ENCODE measurements at regions of chr12 and their contacts with region 1.

Region 1: GRCh38 chr12:6851921-6852650 is at the start of gene USP5:
- DNase-seq: peak; percentile 99
- ATAC-seq: peak; percentile 79
- H3K4me3 Mint-ChIP-seq: peak within 1 kb of the TSS; percentile 95
- H3K27ac Mint-ChIP-seq: peak within 1 kb of the TSS; percentile 100
- H3K4me1 Mint-ChIP-seq: peaks cover 19% of the 10 kb centered on the region
- H3K27me3 Mint-ChIP-seq: no peaks in the 10 kb centered on the region
- CTCF ChIP-seq: no peak
- total RNA-seq, gene USP5: 141 to 158 TPM (median 149 TPM) in 3 replicates

Region 2: DNA sequence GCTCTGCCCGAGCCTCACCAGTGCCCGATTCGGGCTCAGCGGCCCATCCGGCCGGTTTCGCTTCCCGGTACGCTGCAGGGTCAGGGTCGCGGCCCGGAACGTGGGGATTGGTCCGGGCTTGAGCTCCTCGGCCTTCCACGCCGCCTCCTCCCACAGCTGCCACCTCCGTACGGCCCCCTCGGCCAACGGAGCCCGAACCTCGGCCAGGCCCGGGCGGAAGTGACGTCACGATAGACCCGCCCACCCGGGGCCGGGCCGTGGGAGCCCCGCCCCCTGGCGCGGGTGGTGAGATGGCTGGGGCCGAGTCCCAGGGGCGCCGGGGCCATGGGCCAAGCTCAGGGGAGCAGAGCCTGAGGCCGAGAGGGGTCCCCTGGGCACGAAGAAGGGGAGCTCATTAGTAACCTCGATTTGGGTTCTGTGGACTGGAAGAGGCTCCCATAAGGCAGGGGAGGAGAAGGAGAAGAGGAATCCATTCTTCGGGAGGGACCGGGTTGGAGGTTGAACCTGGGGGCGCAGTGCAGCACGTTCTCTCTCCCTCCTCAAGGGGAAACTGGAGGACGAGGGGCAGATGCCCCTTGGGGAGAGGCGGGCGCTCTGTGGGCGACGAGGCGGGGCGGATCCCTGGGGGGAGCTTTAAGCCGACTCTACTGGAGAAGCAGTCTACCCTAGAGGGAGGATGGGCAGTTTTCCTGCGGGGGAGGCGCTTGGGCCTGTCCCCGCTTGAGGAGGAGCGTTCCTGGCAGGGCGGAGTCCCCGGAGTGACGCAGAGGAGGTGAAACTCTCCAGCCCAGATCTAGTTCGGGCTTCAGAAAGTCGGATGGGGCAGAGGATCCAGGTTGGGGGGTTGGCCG is 98.9 kb before region 1 on chr12 and contains the start of gene MLF2:
- CTCF ChIA-PET with region 1: interaction called, 34 read pairs
- POLR2A ChIA-PET with region 1: interaction called, 15 read pairs
- DNase-seq: peak; percentile 99
- ATAC-seq: peak; percentile 95
- H3K4me3 Mint-ChIP-seq: peak within 1 kb of the TSS; percentile 92
- H3K27ac Mint-ChIP-seq: peak within 1 kb of the TSS; percentile 99
- H3K4me1 Mint-ChIP-seq: peaks cover 25% of the 10 kb centered on the region
- H3K27me3 Mint-ChIP-seq: no peaks in the 10 kb centered on the region
- CTCF ChIP-seq: peak; percentile 89; the same call in 1 of the 2 replicates
- total RNA-seq, gene MLF2: 226 to 236 TPM (median 229 TPM) in 3 replicates

Region 3: GRCh38 chr12:6825398-6826124 is 26.5 kb before region 1 on chr12:
- CTCF ChIA-PET with region 1: interaction called, 10 read pairs
- POLR2A ChIA-PET with region 1: interaction called, 3 read pairs
- DNase-seq: peak; percentile 95
- ATAC-seq: peak; percentile 35
- H3K4me3 Mint-ChIP-seq: peak overlapping the region; percentile 78
- H3K27ac Mint-ChIP-seq: no peak overlapping the region
- H3K4me1 Mint-ChIP-seq: peaks cover 60% of the 10 kb centered on the region
- H3K27me3 Mint-ChIP-seq: peaks cover 45% of the 10 kb centered on the region
- CTCF ChIP-seq: peak; percentile 90

Region 4: GRCh38 chr12:6839482-6840201 is 12.4 kb before region 1 on chr12:
- CTCF ChIA-PET with region 1: interaction called, 54 read pairs
- POLR2A ChIA-PET with region 1: interaction called, 9 read pairs
- DNase-seq: peak; percentile 73
- ATAC-seq: peak; percentile 73
- H3K4me3 Mint-ChIP-seq: no peak overlapping the region
- H3K27ac Mint-ChIP-seq: no peak overlapping the region; the same call in 1 of the 2 replicates
- H3K4me1 Mint-ChIP-seq: peaks cover 18% of the 10 kb centered on the region
- H3K27me3 Mint-ChIP-seq: no peaks in the 10 kb centered on the region
- CTCF ChIP-seq: no peak

Region 5: GRCh38 chr12:6890789-6891645 is 38.9 kb after region 1 on chr12:
- CTCF ChIA-PET with region 1: interaction called, 23 read pairs
- POLR2A ChIA-PET with region 1: interaction called, 14 read pairs
- DNase-seq: peak; percentile 99
- ATAC-seq: peak; percentile 92
- H3K4me3 Mint-ChIP-seq: peak overlapping the region; percentile 71
- H3K27ac Mint-ChIP-seq: peak overlapping the region; percentile 99
- H3K4me1 Mint-ChIP-seq: peaks cover 33% of the 10 kb centered on the region
- H3K27me3 Mint-ChIP-seq: peaks cover 4% of the 10 kb centered on the region; the same call in 1 of the 2 replicates
- CTCF ChIP-seq: peak; percentile 35

Region 6: DNA sequence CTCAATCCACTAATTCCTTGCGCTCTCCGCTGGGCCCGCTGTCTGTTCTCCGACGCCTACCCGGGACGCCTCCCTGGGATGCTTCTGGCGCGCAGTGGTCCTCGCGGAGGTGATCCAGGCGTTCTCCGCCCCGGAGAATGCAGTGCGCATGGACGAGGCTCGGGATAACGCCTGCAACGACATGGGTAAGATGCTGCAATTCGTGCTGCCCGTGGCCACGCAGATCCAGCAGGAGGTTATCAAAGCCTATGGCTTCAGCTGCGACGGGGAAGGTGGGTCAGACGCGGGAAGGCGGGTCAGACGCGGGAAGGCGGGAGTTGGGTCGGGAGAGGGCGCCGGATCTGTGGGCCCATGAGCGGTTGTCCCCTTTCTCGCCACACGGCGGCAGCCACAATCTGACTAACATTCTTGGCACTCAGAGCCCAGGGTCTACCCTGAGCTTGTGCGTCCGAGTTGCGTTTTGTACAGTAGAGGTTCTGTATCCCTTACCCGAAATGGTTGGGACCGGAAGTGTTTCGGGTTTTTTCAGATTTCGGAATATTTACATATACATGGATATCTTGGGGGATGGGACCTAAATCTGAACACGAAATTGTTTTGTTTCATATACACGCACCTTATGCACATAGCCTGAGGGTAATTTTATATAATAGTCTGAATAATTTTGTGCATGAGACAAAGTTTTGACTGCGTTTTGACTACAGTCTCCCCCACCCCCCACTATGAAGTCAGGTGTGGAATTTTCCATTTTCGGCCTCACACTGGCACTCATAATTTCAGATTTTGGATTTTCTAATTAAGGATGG is 92.5 kb after region 1 on chr12:
- CTCF ChIA-PET with region 1: interaction called, 21 read pairs
- POLR2A ChIA-PET with region 1: interaction called, 14 read pairs
- DNase-seq: peak; percentile 92
- ATAC-seq: peak; percentile 25
- H3K4me3 Mint-ChIP-seq: peak overlapping the region; percentile 98
- H3K27ac Mint-ChIP-seq: peak overlapping the region; percentile 99
- H3K4me1 Mint-ChIP-seq: peaks cover 34% of the 10 kb centered on the region
- H3K27me3 Mint-ChIP-seq: no peaks in the 10 kb centered on the region
- CTCF ChIP-seq: no peak

Region 7: DNA sequence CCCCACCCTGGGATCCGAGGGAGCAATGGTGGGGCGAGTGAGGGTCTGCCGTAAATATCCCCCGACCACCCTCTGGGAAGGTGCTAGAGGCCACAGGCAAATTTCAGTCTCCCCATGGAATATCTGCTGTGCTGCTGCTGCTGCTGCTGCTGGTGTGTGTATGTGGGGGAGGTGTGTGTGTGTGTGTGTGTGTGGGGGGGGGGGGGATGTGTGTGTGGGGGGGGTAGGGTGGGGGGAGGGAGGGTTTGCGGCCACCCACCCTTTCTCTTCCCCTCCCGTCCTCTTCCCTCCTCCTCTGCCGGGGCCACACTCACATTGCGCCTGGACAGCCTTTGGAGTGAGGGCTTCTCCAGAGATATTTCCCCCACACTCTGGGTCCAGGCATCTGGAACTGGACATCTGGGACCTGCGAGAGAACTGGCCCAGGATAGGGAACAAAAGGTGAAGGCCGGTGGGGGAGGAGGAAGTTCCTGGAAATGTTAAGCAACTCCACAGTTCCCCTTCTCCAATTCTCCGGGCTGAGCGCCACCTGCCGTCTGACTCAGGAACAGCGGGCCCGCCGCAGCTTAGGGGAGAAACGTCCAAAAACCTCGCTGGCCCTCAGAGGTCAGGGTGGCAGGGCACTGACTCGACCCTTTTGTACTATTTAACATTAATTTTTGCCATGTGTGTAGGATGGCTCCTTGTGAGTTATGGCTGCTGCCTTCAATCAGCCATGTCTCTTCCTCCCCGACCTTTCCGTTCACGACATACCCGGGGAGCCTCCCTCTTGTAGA is 256.9 kb after region 1 on chr12 and contains the start of gene C1RL:
- CTCF ChIA-PET with region 1: interaction called, 10 read pairs
- POLR2A ChIA-PET with region 1: no interaction called
- DNase-seq: peak; percentile 95
- ATAC-seq: peak; percentile 60
- H3K4me3 Mint-ChIP-seq: peak within 1 kb of the TSS; percentile 89
- H3K27ac Mint-ChIP-seq: peak within 1 kb of the TSS; percentile 78
- H3K4me1 Mint-ChIP-seq: peaks cover 12% of the 10 kb centered on the region
- H3K27me3 Mint-ChIP-seq: no peaks in the 10 kb centered on the region
- CTCF ChIP-seq: peak; percentile 92
- total RNA-seq, gene C1RL: 17.7 to 23.7 TPM (median 22.9 TPM) in 3 replicates